ENCODE measurements at regions of chr7 and their contacts with region 1.

Region 1: DNA sequence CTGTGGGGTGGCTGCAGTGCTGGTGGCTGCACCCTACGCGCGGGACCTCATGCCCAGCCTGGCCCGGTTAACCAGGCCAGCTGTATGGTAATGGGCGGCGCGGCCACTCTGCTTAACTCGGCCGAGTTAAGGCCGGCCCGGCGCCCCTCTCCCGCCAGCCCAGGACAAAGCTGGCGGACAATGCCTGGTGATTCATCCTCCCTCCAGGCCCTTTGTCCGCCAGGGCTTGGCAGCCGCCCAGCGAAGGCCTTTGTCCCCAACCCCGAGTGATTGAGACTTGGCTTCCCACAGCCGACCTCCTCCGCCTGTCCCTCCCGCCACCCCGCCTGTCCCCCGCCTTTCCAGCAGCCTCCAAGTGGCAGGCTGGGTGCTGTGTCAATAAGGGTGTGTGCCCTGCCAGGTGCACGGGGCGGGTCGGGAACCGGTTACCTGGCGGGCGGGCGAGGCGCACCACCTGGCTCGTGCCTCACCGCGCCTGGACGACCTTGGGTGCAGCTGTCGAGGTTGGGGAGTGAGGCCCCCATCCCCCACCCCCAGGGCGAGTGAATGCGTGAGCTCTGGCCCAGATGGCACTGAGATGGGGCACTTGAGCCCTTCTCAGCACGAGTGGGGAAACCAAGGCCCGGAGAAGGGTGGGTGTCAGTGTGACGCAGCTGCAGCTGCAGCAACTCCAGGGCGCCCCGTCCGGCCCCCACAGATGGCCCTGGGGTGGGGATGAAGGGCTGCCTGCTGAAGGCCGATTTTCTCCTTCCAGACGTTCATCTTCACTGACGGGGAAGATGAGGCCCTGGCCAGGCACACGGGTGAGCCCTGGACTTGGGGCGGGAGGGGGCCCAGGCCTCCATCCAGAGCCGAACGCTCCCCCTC is 4.6 kb downstream of the LFNG start:
- DNase-seq: no peak
- H3K4me3 Mint-ChIP-seq: no peak overlapping the region
- H3K27ac Mint-ChIP-seq: no peak overlapping the region
- H3K4me1 Mint-ChIP-seq: peaks cover 58% of the 10 kb centered on the region
- H3K27me3 Mint-ChIP-seq: no peaks in the 10 kb centered on the region

Region 2: DNA sequence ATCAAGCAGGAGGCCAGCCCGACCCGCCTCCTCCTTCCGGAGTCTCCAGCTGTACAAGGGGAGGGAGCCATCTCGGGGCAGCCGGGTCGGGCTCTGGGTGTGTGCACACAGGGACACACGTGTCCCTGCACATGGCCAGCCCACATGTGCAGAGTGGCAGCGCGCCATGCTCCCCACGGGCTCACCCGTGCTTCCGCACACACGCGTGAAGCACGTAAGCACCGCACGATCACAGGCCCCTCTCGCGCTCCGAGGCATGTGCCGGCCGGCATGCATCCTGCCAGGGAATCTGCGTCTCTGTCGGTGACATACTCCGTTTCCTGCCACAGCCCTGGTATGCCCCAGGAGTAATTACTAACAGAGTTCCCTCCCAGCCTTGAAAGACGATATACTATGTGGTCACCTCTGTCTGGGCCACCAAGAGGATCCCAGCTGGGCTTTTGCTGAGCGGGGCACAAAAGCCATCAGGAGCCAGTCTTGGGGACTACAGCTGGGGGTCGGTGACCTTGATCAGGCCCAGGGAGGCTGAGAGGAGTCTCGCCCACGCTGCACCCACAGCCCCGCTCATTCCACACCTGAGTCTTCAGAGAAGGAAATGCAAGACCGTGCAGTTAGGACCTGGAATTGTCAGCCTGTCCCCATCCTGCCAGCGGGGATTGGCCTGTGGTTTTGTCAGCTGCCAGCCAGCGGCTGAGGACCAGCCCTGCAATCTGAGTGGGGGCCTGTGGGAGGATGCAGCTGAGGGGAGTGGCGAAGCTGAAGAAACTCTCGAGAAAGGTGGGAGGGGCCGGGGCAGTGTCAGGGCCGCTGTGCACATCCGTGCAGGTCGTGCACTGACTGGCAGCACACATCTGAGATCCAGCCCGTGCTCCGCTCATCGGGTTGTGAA is 15.6 kb before region 1 on chr7:
- CTCF ChIA-PET with region 1: interaction called, 3 read pairs
- intact Hi-C with region 1: loop called (anchors 1 kb)
- DNase-seq: peak; percentile 83
- H3K4me3 Mint-ChIP-seq: peak overlapping the region; percentile 59
- H3K27ac Mint-ChIP-seq: peak overlapping the region; percentile 37
- H3K4me1 Mint-ChIP-seq: peaks cover 55% of the 10 kb centered on the region
- H3K27me3 Mint-ChIP-seq: no peaks in the 10 kb centered on the region

Region 3: GRCh38 chr7:2632733-2633537 is 108.8 kb after region 1 on chr7:
- CTCF ChIA-PET with region 1: no interaction called
- intact Hi-C with region 1: loop called (anchors 2 kb)
- DNase-seq: peak; percentile 67
- H3K4me3 Mint-ChIP-seq: peak overlapping the region; percentile 92
- H3K27ac Mint-ChIP-seq: peak overlapping the region; percentile 53
- H3K4me1 Mint-ChIP-seq: peaks cover 15% of the 10 kb centered on the region
- H3K27me3 Mint-ChIP-seq: no peaks in the 10 kb centered on the region

Measured in activated naive CD4-positive, alpha-beta T cell treated with anti-CD3 and anti-CD28 coated beads for 36 hours (primary cell).